Head of caudate nucleus (tissue), 42 donors: ENCODE measurements at regions of chr7 and their contacts with region 1.

Region 1: GRCh38 chr7:19713676-19714075 is 4.8 kb upstream of the POLR1F start:
- DNase-seq: peak in 30 of 42 donors; percentile 3 to 81 (median 42)

Region 2: GRCh38 chr7:18829858-18830285 is 883.8 kb before region 1 on chr7:
- intact Hi-C with region 1: no loop called
- DNase-seq: no peak

Region 3: GRCh38 chr7:20598459-20599309 is 885.0 kb after region 1 on chr7:
- intact Hi-C with region 1: loop called (anchors 5 kb)
- DNase-seq: peak in 12 of 42 donors; percentile 5 to 65 (median 24)